AG04449 (cell line): ENCODE measurements at regions of chr1 and their contacts with region 1.

Region 1: DNA sequence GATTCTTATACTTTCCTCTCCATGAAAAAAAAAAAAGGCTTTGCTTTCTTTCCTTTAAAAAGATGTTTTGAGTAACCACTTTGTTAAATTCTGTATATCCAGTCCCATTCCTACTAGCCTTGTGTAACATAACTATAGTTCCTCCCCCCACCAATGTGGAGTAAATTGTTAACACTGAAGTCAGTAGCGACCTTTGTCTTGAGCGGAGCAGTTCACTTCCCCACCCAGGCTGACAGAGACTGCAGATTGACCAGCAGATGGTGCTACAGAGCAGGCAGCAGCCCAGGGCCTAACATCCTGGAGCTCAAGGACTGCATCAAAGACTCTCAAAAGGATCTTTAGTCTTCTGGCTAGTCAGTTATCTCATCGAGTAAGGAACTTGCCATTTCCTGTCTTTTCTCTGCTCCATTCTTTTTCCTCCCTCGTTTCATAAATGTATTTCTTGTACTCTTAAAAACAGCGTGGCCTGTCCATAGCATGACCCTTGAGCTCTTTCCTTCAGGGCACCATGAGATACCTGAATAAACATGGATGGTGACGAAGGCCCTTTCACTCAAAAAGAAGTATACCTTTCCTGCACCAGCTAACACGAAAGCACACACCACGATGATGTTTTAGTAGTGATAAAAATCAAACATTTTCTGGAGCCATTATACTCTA is 503.5 kb upstream of the PKN2 start:
- DNase-seq: peak; percentile 26
- H3K4me3 ChIP-seq: no peak overlapping the region
- CTCF ChIP-seq: peak; percentile 98

Region 2: GRCh38 chr1:88145752-88146151 is 34.8 kb before region 1 on chr1:
- CTCF ChIA-PET with region 1: interaction called, 15 read pairs
- POLR2A ChIA-PET with region 1: no interaction called
- DNase-seq: no peak
- H3K4me3 ChIP-seq: no peak overlapping the region
- CTCF ChIP-seq: no peak

Region 3: GRCh38 chr1:88200545-88200944 is 20.0 kb after region 1 on chr1:
- CTCF ChIA-PET with region 1: interaction called, 12 read pairs
- POLR2A ChIA-PET with region 1: no interaction called
- DNase-seq: no peak
- H3K4me3 ChIP-seq: no peak overlapping the region
- CTCF ChIP-seq: no peak

Region 4: DNA sequence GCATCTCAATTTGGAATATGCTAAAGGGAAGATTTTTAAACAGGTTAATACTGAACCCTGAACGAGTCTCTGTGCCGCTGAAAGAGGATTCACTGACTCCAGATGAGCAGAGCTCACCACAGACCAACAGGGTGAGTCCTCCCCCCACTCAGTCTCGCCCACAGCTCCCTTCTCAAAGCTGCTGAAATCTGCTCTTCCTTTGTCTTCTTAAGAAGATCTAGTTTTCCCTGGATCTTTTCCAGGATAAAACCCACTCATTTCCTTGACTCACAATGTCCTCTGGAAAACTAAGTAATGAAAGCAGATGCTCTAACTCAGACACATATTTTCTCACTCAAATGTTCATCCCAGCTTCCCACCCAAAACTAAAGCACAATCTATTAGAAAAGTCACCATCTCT is 56.5 kb after region 1 on chr1:
- CTCF ChIA-PET with region 1: interaction called, 10 read pairs
- POLR2A ChIA-PET with region 1: no interaction called
- DNase-seq: no peak
- H3K4me3 ChIP-seq: no peak overlapping the region
- CTCF ChIP-seq: no peak

Region 5: DNA sequence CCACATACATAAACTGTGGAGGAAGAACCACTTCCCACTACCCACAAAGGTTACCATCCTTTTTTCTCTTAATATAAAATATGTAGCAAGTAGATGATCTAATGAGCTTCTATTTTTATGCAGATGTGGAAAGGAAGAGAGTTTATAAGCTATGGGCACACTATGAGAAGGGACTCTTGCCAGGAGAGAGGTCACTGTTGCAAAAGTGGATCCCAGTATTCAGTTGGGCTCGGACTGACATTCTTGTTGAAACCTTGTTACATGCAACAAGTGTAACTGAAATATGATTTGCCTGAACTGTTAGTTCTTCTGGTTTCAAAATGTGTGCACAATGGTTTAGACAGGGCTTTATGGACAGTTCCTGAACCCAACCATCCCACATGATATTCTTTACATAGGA is 106.1 kb after region 1 on chr1:
- CTCF ChIA-PET with region 1: no interaction called
- POLR2A ChIA-PET with region 1: no interaction called
- DNase-seq: no peak
- H3K4me3 ChIP-seq: no peak overlapping the region
- CTCF ChIP-seq: no peak

Region 6: GRCh38 chr1:88302843-88303486 is 122.4 kb after region 1 on chr1:
- CTCF ChIA-PET with region 1: interaction called, 122 read pairs
- POLR2A ChIA-PET with region 1: no interaction called
- DNase-seq: peak; percentile 17
- H3K4me3 ChIP-seq: no peak overlapping the region
- CTCF ChIP-seq: peak; percentile 25